ENCODE measurements at regions of chr10 and their contacts with region 1.

Region 1: DNA sequence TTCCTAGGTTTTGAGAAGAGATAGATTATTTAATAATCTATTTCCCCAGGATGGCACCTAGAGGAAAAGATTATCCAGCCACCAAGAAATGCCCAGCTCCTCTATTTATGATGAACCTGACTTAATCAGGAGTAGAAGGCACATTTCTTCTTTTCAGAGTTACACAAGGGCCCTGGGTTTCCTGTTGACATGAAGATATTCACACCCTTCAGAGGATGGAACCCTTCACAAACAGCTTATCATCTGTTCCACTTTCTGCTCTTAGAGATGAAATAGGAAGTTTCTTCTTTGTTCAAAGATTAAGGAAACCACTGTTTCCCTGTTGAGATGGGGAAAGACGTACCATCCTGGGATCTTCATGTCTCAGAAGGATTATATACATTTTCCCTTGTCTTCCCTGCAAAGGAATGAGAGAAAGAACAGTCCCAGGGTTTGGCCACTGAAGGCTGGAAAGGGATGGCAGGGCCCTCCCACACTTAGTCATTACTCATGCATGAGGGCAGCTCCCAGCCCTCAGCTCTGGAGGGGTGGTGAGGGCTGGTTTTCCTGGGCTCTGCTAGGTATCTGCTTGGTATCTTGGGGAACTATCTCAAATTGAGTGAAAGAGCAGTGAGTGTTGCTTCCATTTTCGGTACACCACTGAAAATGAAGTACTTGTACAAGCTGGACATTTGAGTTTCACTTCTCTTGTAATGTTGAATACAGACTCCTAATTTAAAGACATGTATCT is 64.0 kb downstream of the MTPAP start:
- DNase-seq: no peak
- H3K4me3 ChIP-seq: no peak overlapping the region
- H3K27ac ChIP-seq: no peak overlapping the region
- H3K4me1 ChIP-seq: no peaks in the 10 kb centered on the region
- H3K27me3 ChIP-seq: peaks cover 9 to 10% of the 10 kb centered on the region in 2 experiments
- CTCF ChIP-seq: no peak
- POLR2A ChIP-seq: no peak

Region 2: GRCh38 chr10:30270247-30270646 is 14.8 kb before region 1 on chr10:
- CTCF ChIA-PET with region 1: interaction called, 29 read pairs
- POLR2A ChIA-PET with region 1: no interaction called
- dilution Hi-C with region 1: no loop called
- intact Hi-C with region 1: no loop called
- DNase-seq: peak; percentile 29
- H3K4me3 ChIP-seq: no peak overlapping the region
- H3K27ac ChIP-seq: no peak overlapping the region
- H3K4me1 ChIP-seq: no peaks in the 10 kb centered on the region
- H3K27me3 ChIP-seq: peaks cover 7 to 15% of the 10 kb centered on the region in 2 experiments
- CTCF ChIP-seq: peak in 1 of 2 donors; percentile 3
- POLR2A ChIP-seq: no peak

Region 3: GRCh38 chr10:30365251-30365632 is 80.2 kb after region 1 on chr10:
- CTCF ChIA-PET with region 1: no interaction called
- POLR2A ChIA-PET with region 1: no interaction called
- dilution Hi-C with region 1: no loop called
- intact Hi-C with region 1: no loop called
- DNase-seq: no peak
- H3K4me3 ChIP-seq: no peak overlapping the region
- H3K27ac ChIP-seq: no peak overlapping the region
- H3K4me1 ChIP-seq: no peaks in the 10 kb centered on the region
- H3K27me3 ChIP-seq: peaks cover 2 to 9% of the 10 kb centered on the region in 2 experiments
- CTCF ChIP-seq: no peak
- POLR2A ChIP-seq: no peak